GM12878 (cell line): ENCODE measurements at regions of chr17 and their contacts with region 1.

Region 1: GRCh38 chr17:48259694-48260291 is 152.2 kb downstream of the SNX11 start:
- DNase-seq: no peak
- ATAC-seq: no peak
- H3K4me3 ChIP-seq: no peak overlapping the region
- H3K27ac ChIP-seq: no peak overlapping the region
- H3K4me1 ChIP-seq: no peaks in the 10 kb centered on the region
- H3K27me3 ChIP-seq: no peaks in the 10 kb centered on the region
- CTCF ChIP-seq: peak; percentile 47 to 62 (median 61)
- EP300 ChIP-seq: no peak
- POLR2A ChIP-seq: no peak
- RAD21 ChIP-seq: peak; percentile 77

Region 2: DNA sequence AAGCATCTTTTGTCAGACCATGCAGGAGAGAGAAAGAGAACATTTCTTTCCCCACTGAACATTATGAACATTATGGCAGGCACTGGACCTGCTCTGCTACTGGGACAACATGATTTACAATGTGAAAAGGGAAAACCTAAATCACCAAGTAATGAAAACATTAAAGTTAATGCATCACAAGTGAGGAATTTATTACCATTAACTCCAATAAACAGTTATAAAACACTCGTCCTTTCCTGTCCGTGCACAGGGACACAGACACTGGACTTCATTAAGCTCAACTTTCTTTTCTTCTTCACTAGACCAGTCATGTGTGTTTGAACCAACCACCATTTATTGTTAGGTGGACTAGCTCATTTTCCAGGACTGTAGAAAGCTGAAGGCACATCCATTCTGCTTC is 56.8 kb before region 1 on chr17:
- CTCF ChIA-PET with region 1: no interaction called
- POLR2A ChIA-PET with region 1: no interaction called
- RAD21 ChIA-PET with region 1: no interaction called
- SMC1A ChIA-PET with region 1: no interaction called
- in situ Hi-C with region 1: no loop called
- intact Hi-C with region 1: no loop called
- DNase-seq: no peak
- ATAC-seq: no peak
- H3K4me3 ChIP-seq: no peak overlapping the region
- H3K27ac ChIP-seq: no peak overlapping the region
- H3K4me1 ChIP-seq: peaks cover 6% of the 10 kb centered on the region; the same call in 1 of the 2 replicates
- H3K27me3 ChIP-seq: no peaks in the 10 kb centered on the region
- CTCF ChIP-seq: no peak
- EP300 ChIP-seq: no peak
- POLR2A ChIP-seq: no peak
- RAD21 ChIP-seq: no peak

Region 3: GRCh38 chr17:48241131-48241591 is 18.6 kb before region 1 on chr17:
- CTCF ChIA-PET with region 1: interaction called, 220 read pairs
- POLR2A ChIA-PET with region 1: interaction called, 4 read pairs
- RAD21 ChIA-PET with region 1: interaction called, 6 read pairs
- SMC1A ChIA-PET with region 1: interaction called, 23 read pairs
- in situ Hi-C with region 1: no loop called
- intact Hi-C with region 1: no loop called
- DNase-seq: peak; percentile 54
- ATAC-seq: peak; percentile 94
- H3K4me3 ChIP-seq: no peak overlapping the region
- H3K27ac ChIP-seq: peak overlapping the region; percentile 74
- H3K4me1 ChIP-seq: peaks cover 46% of the 10 kb centered on the region
- H3K27me3 ChIP-seq: no peaks in the 10 kb centered on the region
- CTCF ChIP-seq: no peak
- EP300 ChIP-seq: no peak; a peak in 1 of 4 replicates
- POLR2A ChIP-seq: no peak
- RAD21 ChIP-seq: no peak

Region 4: DNA sequence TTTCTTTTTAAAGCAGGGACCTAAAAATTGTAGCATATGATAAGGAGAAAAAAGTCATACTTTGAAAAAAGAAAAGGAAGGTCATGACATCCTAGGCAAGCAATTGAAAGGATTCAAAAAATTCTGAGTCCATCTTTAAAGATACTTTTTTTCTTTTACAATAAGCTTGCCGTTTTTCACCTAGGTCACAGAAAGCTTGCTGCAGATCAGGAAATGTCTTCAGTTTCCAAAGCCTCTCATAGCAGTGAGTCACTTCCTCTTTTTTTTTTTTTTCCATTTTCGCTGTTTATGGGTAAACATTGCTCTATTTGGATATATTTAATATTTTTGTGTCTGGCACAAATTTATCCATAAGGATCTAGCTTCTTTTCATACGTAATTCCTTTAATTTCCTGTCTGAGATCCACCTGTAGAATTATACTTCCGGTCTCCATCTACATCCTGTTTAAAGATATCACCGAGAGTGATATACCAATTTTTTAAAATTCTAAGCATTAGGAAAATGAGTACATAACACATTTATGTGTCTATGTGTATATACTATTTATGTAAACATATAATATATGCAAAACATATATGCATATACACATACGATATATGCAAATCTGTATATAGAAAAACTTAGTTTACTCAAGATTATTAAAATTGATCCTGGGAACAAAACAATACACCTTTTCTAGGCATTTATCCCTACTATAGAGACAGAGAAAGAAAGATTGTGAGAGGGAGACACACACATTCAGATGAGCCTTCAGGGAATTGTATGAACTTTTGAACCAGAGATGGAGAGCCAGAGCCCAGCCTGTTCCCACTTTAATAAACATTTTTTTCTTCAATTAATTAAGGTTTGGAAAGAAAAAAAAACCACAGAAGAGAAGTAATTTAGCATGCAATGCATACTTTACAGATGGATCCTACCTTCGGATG is 35.8 kb after region 1 on chr17:
- CTCF ChIA-PET with region 1: interaction called, 190 read pairs
- POLR2A ChIA-PET with region 1: interaction called, 3 read pairs
- RAD21 ChIA-PET with region 1: interaction called, 26 read pairs
- SMC1A ChIA-PET with region 1: interaction called, 21 read pairs
- in situ Hi-C with region 1: no loop called
- intact Hi-C with region 1: no loop called
- DNase-seq: peak; percentile 47
- ATAC-seq: peak; percentile 77
- H3K4me3 ChIP-seq: peak overlapping the region; percentile 20
- H3K27ac ChIP-seq: peak overlapping the region; percentile 95
- H3K4me1 ChIP-seq: peaks cover 48% of the 10 kb centered on the region
- H3K27me3 ChIP-seq: no peaks in the 10 kb centered on the region
- CTCF ChIP-seq: no peak
- EP300 ChIP-seq: peak in 1 of 2 experiments; percentile 24; a peak in 1 of 4 replicates
- POLR2A ChIP-seq: no peak
- RAD21 ChIP-seq: no peak

Region 5: GRCh38 chr17:48586355-48587258 is 326.8 kb after region 1 on chr17:
- CTCF ChIA-PET with region 1: interaction called, 113 read pairs
- POLR2A ChIA-PET with region 1: no interaction called
- RAD21 ChIA-PET with region 1: interaction called, 6 read pairs
- SMC1A ChIA-PET with region 1: interaction called, 9 read pairs
- in situ Hi-C with region 1: no loop called
- intact Hi-C with region 1: no loop called
- DNase-seq: no peak
- ATAC-seq: peak; percentile 59
- H3K4me3 ChIP-seq: peak overlapping the region; percentile 64
- H3K27ac ChIP-seq: no peak overlapping the region
- H3K4me1 ChIP-seq: peaks cover 3% of the 10 kb centered on the region
- H3K27me3 ChIP-seq: peaks cover 0 to 4% of the 10 kb centered on the region in 2 experiments; a peak in 1 of 4 replicates
- CTCF ChIP-seq: no peak
- EP300 ChIP-seq: no peak
- POLR2A ChIP-seq: no peak
- RAD21 ChIP-seq: no peak

Region 6: DNA sequence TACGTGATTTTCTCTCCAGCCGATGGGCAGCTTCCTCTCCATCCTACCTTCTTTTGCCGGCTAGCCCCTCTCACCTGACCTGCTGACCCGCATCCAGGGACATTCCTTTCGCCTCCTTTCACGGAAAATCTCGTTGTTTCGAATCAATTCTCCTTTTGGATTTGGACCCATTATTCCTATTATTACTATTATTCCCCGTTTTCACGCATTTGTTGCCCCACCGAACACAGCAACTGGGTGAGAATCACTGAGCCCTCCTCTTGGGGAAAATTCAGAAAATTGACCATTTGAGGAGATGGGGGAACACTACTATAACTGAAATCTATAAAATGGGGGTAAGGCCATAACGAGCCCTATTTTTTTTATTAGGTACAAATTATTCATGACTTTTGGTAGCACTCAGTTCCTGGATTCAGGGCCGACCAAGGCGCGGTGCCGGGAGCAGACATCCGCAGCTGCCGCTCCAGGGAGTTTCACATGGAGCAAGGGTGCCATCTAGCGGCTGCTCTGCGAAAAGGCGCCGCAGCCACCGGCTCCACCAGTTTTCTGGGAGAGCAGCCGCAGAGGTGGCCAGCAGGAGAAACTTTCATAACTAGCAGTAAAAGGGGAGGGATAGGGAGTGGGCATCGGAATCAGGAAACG is 358.6 kb after region 1 on chr17:
- CTCF ChIA-PET with region 1: interaction called, 5 read pairs
- POLR2A ChIA-PET with region 1: no interaction called
- RAD21 ChIA-PET with region 1: interaction called, 5 read pairs
- SMC1A ChIA-PET with region 1: interaction called, 3 read pairs
- in situ Hi-C with region 1: no loop called
- intact Hi-C with region 1: loop called (anchors 5 kb)
- DNase-seq: no peak
- ATAC-seq: peak; percentile 88
- H3K4me3 ChIP-seq: no peak overlapping the region
- H3K27ac ChIP-seq: no peak overlapping the region
- H3K4me1 ChIP-seq: no peaks in the 10 kb centered on the region
- H3K27me3 ChIP-seq: peaks cover 36 to 46% of the 10 kb centered on the region in 2 experiments
- CTCF ChIP-seq: peak; percentile 94 to 97 (median 96)
- EP300 ChIP-seq: no peak
- POLR2A ChIP-seq: no peak
- RAD21 ChIP-seq: peak; percentile 85

Region 7: DNA sequence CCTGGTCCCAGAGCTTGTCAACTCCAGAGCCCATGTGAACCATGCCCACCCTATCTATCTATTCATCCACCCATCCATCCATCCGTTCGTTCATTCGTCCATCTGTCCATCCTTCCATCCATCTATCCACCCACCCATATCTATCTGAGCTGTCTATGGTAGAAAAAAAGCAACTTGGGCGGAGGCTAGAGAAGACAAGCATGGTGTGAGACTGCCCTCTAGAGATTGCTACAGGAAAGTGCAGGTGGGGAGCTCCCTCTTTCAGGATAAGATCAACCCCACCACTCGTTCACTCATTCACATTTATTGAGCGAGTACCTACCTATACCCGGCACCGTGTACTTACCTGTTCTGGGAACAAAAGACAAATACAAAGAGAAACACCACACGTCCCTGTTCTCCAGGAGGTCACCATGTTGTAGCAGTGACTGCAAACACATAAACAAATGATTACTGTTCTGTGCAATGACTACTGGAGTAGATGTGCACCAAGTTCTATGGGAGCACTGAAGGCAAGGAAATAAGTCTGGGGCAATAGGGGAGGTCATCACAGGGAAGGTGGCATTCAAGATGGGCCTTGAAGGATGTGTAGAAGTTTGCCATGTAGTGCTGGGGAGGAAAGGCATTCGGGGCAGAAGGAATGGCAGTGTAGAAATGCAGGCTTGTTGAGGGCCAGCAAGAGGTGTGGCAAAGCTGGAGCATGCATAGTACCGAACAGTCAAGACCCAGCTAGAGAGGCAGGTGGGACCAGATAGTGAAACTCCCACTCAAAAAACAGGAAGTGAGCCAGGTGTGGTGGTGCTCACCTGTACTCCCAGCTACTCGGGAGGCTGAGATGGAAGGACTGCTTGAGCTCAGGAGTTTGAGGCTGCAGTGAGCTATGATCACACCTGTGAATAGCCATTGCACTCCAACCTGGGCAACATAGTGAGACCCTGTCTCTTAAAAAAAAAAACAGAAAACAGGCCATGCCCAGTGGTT is 619.4 kb after region 1 on chr17:
- CTCF ChIA-PET with region 1: no interaction called
- POLR2A ChIA-PET with region 1: no interaction called
- RAD21 ChIA-PET with region 1: no interaction called
- SMC1A ChIA-PET with region 1: no interaction called
- in situ Hi-C with region 1: no loop called
- intact Hi-C with region 1: no loop called
- DNase-seq: peak; percentile 55
- ATAC-seq: peak; percentile 89
- H3K4me3 ChIP-seq: no peak overlapping the region
- H3K27ac ChIP-seq: no peak overlapping the region
- H3K4me1 ChIP-seq: peaks cover 23% of the 10 kb centered on the region
- H3K27me3 ChIP-seq: no peaks in the 10 kb centered on the region
- CTCF ChIP-seq: peak; percentile 93 to 99 (median 98); a peak in 5 of 6 replicates
- EP300 ChIP-seq: no peak
- POLR2A ChIP-seq: no peak
- RAD21 ChIP-seq: peak; percentile 99